Activated CD4-positive, alpha-beta T cell treated with anti-CD3 and anti-CD28 coated beads for 36 hours (primary cell): ENCODE measurements at regions of chr2 and their contacts with region 1.

Region 1: GRCh38 chr2:64114063-64114911 is 29.9 kb downstream of the PELI1 start:
- DNase-seq: no peak
- ATAC-seq: peak; percentile 85
- H3K4me3 Mint-ChIP-seq: peak overlapping the region; percentile 24
- H3K27ac Mint-ChIP-seq: peak overlapping the region; percentile 64
- H3K4me1 Mint-ChIP-seq: peaks cover 74% of the 10 kb centered on the region
- H3K27me3 Mint-ChIP-seq: no peaks in the 10 kb centered on the region

Region 2: GRCh38 chr2:64101141-64101591 is 13.1 kb before region 1 on chr2:
- CTCF ChIA-PET with region 1: interaction called, 12 read pairs
- POLR2A ChIA-PET with region 1: interaction called, 5 read pairs
- intact Hi-C with region 1: loop called (anchors 1 kb)
- DNase-seq: no peak
- ATAC-seq: peak; percentile 86
- H3K4me3 Mint-ChIP-seq: peak overlapping the region; percentile 3
- H3K27ac Mint-ChIP-seq: peak overlapping the region; percentile 51
- H3K4me1 Mint-ChIP-seq: peaks cover 54% of the 10 kb centered on the region
- H3K27me3 Mint-ChIP-seq: no peaks in the 10 kb centered on the region

Region 3: DNA sequence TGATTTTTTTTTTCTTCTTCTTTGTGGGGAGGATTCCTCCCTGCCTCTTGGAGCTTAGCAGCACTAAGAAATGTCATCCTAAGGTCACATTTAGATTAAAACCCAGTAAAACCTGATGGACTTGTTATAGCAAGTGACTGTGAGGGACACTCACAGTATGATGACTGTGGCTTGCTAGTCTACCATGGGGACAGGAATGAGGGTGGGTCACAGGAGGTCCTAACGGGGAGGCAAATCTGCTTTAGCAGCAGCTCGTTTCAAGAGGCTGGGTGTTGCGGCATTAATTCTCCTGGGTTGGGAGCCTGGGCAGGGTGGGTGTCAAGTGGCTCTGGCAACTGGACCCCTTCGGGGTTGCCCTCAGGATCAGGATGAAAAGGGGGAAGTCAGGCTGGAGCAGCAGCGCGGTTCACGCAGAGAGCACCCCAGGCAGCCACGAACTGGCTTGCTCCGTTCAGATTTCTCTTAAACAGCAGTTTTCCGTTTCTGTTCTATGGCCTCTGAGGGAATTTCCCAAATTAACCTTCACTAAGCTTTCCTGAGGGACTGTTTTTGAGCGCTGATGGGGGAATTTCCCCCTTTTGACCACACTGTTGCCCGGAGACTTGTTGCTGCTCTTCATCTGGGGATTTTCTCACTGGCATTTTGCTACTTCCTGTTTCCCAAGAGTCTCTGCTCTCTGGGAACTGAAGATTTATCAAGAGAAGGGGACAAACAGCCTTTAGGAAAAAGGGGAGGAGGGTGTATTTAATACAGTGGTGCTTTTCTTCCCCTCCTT is 89.8 kb after region 1 on chr2:
- CTCF ChIA-PET with region 1: interaction called, 3 read pairs
- POLR2A ChIA-PET with region 1: no interaction called
- intact Hi-C with region 1: loop called in 1 of 2 experiments (anchors 1 kb)
- DNase-seq: peak; percentile 59
- ATAC-seq: peak; percentile 53
- H3K4me3 Mint-ChIP-seq: peak overlapping the region; percentile 65
- H3K27ac Mint-ChIP-seq: peak overlapping the region; percentile 93
- H3K4me1 Mint-ChIP-seq: peaks cover 72% of the 10 kb centered on the region
- H3K27me3 Mint-ChIP-seq: no peaks in the 10 kb centered on the region